ENCODE measurements at regions of chr12 and their contacts with region 1.

Region 1: GRCh38 chr12:126663304-126664094 is 1598.3 kb downstream of the AACS start:
- ATAC-seq: no peak
- H3K4me3 ChIP-seq: no peak overlapping the region
- H3K27ac ChIP-seq: no peak overlapping the region
- H3K4me1 ChIP-seq: no peaks in the 10 kb centered on the region

Region 2: DNA sequence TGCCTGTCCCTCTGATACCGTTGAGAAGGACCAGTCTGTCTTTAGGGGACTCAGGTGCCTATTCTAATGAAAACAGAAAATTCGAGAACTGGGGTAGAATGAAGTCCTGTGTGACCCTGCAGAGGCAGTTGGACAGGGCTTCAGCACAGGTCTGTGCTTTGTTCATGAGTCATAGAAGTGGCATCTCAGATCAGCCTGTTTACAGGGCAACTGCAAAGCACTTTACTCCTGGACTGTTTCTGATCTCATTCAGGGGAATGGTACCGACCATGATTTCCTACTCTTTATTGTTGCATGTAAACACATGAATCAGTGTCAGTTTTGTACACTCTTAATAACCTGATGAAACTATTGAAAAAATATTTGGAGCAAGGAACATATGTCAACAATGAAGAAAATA is 81.3 kb before region 1 on chr12:
- in situ Hi-C with region 1: no loop called
- ATAC-seq: peak in 2 of 8 experiments; percentile 28 to 53
- H3K4me3 ChIP-seq: no peak overlapping the region
- H3K27ac ChIP-seq: no peak overlapping the region
- H3K4me1 ChIP-seq: no peaks in the 10 kb centered on the region

Region 3: GRCh38 chr12:126772171-126772864 is 108.8 kb after region 1 on chr12:
- in situ Hi-C with region 1: loop called in 1 of 9 experiments (anchors 25 kb)
- ATAC-seq: peak in 1 of 8 experiments; percentile 89
- H3K4me3 ChIP-seq: no peak overlapping the region
- H3K27ac ChIP-seq: no peak overlapping the region
- H3K4me1 ChIP-seq: no peaks in the 10 kb centered on the region

Measured in motor neuron (in vitro differentiated cells).